ENCODE measurements at regions of chr12 and their contacts with region 1.

Region 1: GRCh38 chr12:12133259-12133658 is 62.5 kb downstream of the BCL2L14 start:
- DNase-seq: no peak
- H3K4me3 ChIP-seq: no peak overlapping the region
- H3K27ac ChIP-seq: no peak overlapping the region
- H3K4me1 ChIP-seq: peaks cover 0 to 5% (median 0%) of the 10 kb centered on the region in 4 donors
- H3K27me3 ChIP-seq: no peaks in the 10 kb centered on the region
- CTCF ChIP-seq: no peak
- EP300 ChIP-seq: no peak
- POLR2A ChIP-seq: no peak

Region 2: DNA sequence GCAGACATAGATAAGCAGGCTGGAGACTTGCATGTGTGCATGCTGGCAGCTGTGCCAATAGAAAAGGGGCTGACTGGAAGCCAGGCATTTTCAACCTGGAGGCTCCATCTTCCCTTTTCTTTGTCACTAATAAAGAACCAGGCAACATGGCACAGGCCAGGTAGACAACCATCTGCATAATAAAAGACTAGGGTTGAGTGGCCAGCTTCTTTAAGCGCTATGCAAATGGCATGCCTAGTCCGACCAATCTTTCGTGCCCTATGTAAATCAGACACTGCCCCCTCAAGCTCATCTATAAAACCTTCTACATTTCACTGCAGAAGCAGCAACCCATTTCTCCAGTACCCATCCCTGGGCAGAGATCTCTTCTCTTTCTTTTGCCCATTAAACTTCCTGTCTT is 1675.5 kb before region 1 on chr12:
- in situ Hi-C with region 1: no loop called
- intact Hi-C with region 1: loop called (anchors 5 kb)
- DNase-seq: no peak
- H3K4me3 ChIP-seq: no peak overlapping the region
- H3K27ac ChIP-seq: no peak overlapping the region
- H3K4me1 ChIP-seq: peaks cover 0 to 4% (median 0%) of the 10 kb centered on the region in 4 donors
- H3K27me3 ChIP-seq: no peaks in the 10 kb centered on the region
- CTCF ChIP-seq: no peak
- EP300 ChIP-seq: no peak
- POLR2A ChIP-seq: no peak

Region 3: DNA sequence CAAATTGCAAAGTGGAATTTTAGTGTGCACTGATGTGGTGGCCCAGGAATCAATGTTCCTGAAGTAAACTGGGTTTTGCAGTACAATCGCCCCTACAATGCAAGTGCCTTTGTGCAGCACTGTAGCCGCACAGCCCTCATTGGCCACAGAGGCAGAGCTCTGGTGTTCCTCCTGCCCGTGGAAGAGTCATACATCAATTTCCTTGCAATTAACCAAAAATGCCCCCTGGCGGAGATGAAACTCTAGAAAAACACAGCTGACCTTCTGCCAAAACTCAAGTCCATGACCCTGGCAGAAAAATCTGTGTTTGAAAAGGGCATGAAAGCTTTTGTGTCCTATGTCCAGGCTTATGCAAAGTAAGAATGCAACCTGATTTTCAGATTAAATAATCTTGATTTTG is 620.0 kb before region 1 on chr12:
- in situ Hi-C with region 1: no loop called
- intact Hi-C with region 1: no loop called
- DNase-seq: no peak
- H3K4me3 ChIP-seq: no peak overlapping the region
- H3K27ac ChIP-seq: no peak overlapping the region
- H3K4me1 ChIP-seq: no peaks in the 10 kb centered on the region
- H3K27me3 ChIP-seq: no peaks in the 10 kb centered on the region
- CTCF ChIP-seq: no peak
- EP300 ChIP-seq: no peak
- POLR2A ChIP-seq: no peak

Region 4: DNA sequence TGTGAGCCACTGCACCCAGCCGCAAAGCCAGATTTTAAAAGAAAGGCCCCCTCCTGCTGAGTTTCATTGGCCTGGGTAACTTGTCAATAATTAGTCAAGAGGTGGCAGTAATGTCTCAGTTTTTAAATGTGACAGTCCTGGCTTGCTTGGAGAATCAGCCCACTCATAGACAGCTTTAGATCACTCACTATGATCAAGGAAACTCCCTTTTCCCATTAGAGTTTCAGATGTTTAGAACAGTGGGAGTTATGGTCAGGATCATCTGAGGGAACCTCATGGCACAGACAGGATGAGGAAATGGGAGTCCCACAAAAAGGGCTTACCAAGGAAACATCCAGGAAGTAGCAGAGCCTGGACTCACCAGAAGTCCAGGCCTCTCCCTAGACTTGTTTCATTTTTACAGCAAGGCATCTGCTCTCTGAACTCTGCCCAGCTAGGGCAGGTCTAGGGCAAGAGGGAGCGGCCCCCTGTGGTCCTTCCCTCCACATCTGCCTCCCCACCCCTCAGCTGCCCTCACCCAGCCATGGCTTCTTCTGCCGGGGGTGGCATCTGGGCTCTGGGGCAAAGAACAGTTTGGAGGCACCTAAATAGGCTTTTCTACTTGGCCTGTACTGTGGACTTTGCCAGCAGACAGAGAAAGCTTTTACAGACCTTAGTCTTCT is 51.3 kb before region 1 on chr12:
- in situ Hi-C with region 1: no loop called
- intact Hi-C with region 1: no loop called
- DNase-seq: peak; percentile 78
- H3K4me3 ChIP-seq: no peak overlapping the region
- H3K27ac ChIP-seq: peak overlapping the region; percentile 72 to 83 (median 78)
- H3K4me1 ChIP-seq: peaks cover 0 to 26% (median 12%) of the 10 kb centered on the region in 4 donors
- H3K27me3 ChIP-seq: no peaks in the 10 kb centered on the region
- CTCF ChIP-seq: peak in 2 of 5 experiments; percentile 5 to 10
- EP300 ChIP-seq: no peak
- POLR2A ChIP-seq: no peak

Region 5: GRCh38 chr12:12201274-12201758 is 68.1 kb after region 1 on chr12:
- in situ Hi-C with region 1: no loop called
- intact Hi-C with region 1: no loop called
- DNase-seq: no peak
- H3K4me3 ChIP-seq: no peak overlapping the region
- H3K27ac ChIP-seq: no peak overlapping the region
- H3K4me1 ChIP-seq: no peaks in the 10 kb centered on the region
- H3K27me3 ChIP-seq: no peaks in the 10 kb centered on the region
- CTCF ChIP-seq: no peak
- EP300 ChIP-seq: no peak
- POLR2A ChIP-seq: no peak

Region 6: GRCh38 chr12:12282761-12283425 is 149.6 kb after region 1 on chr12:
- in situ Hi-C with region 1: no loop called
- intact Hi-C with region 1: no loop called
- DNase-seq: no peak
- H3K4me3 ChIP-seq: no peak overlapping the region
- H3K27ac ChIP-seq: no peak overlapping the region
- H3K4me1 ChIP-seq: no peaks in the 10 kb centered on the region
- H3K27me3 ChIP-seq: no peaks in the 10 kb centered on the region
- CTCF ChIP-seq: no peak
- EP300 ChIP-seq: no peak
- POLR2A ChIP-seq: no peak

Measured in transverse colon (tissue), 4 donors.